SK-N-SH (cell line): ENCODE measurements at regions of chr14 and their contacts with region 1.

Region 1: DNA sequence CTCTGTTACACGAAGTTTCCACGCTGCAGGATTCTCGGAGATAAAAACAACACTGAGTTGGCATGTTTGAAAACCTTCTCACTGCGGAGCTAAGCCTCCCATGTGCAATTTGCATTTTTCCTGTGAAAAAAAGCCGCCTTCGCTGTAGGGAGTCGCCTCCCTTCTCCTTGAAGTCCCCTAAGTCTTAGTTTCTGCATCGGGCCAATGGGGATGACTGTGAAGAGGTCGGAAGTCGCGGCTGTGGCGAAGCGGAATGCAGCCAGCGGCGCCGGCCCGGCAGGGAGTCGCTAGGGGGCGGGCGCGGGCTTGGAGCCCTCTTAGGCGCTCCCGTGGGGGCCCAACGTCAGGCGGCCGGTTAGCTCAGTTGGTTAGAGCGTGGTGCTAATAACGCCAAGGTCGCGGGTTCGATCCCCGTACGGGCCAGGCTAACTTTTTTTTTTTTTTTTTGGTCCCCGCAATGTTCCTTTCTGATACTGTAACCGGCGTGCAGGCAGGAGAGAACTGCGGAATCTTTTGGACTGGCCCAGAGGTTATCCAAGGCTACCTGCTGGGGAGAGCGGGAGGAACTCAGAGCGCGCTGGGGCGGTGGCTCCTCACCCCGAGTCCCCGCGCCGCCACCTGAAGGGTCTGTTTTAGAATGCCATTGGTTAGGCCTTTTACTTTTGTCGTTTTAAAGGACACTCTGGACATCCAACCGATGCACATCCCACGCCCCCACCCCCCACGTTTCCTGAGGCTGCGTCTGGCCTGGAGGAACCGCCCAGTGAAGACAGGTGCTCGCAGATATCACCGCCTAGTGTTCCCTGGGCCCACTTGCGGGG is 2.6 kb upstream of the ZNF839 start:
- DNase-seq: peak; percentile 93
- H3K4me3 ChIP-seq: peak overlapping the region; percentile 59 to 62
- H3K27ac ChIP-seq: peak overlapping the region; percentile 70 to 90
- H3K4me1 ChIP-seq: peaks cover 5 to 26% of the 10 kb centered on the region in 2 experiments; a peak in 3 of 4 replicates
- H3K27me3 ChIP-seq: no peaks in the 10 kb centered on the region
- CTCF ChIP-seq: peak; percentile 77
- EP300 ChIP-seq: no peak; a peak in 1 of 4 replicates
- RAD21 ChIP-seq: no peak

Region 2: GRCh38 chr14:102063091-102063802 is 253.7 kb before region 1 on chr14:
- CTCF ChIA-PET with region 1: interaction called, 48 read pairs
- POLR2A ChIA-PET with region 1: interaction called, 4 read pairs
- DNase-seq: peak; percentile 94
- H3K4me3 ChIP-seq: no peak overlapping the region
- H3K27ac ChIP-seq: no peak overlapping the region
- H3K4me1 ChIP-seq: no peaks in the 10 kb centered on the region
- H3K27me3 ChIP-seq: no peaks in the 10 kb centered on the region
- CTCF ChIP-seq: peak; percentile 60
- EP300 ChIP-seq: no peak
- RAD21 ChIP-seq: peak; percentile 76

Region 3: DNA sequence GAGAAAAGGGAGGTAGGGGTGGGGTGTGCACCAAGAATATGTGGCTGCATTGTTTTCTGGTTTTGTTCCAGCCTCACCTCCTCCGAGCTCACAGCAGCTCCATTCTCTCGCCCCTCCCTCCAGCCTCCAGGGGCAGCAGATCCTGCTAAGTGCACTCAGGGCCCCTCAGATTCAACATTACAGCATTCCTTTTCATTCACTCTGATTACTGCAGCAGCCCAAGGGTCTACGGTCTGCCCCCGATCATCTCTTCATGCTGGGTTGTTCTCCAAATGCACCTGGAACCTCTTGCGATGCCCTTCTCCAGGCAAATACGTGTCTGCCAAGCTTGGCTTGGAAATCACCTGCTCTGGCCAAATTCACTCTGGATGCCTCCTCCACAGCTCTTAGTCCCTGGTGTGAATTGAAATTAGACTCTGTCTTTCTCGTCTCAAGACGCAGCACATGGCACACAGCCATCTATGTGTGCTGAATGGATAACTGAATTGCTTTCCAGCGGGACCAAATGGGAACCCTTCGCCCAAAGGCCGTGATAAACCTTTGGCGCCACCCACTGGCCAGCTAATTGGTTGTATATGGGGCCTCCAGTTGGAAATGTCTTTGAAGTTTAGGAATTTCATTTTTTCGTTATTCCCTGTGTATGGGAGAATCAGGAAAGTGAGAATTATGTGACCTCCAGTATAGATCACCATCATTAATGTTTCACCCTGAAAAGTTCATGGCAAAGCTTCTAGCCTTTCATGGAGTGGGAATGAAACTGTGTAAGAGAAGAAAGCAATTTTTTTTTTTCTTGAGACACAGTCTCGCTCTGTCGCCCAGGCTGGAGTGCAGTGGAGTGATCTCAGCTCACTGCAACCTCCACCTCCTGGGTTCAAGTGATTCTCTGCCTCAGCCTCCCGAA is 220.5 kb before region 1 on chr14:
- CTCF ChIA-PET with region 1: interaction called, 65 read pairs
- POLR2A ChIA-PET with region 1: no interaction called
- DNase-seq: peak; percentile 80
- H3K4me3 ChIP-seq: peak overlapping the region in 1 of 2 experiments; percentile 4; a peak in 1 of 4 replicates
- H3K27ac ChIP-seq: no peak overlapping the region
- H3K4me1 ChIP-seq: peaks cover 5 to 9% of the 10 kb centered on the region in 2 experiments; a peak in 2 of 4 replicates
- H3K27me3 ChIP-seq: no peaks in the 10 kb centered on the region
- CTCF ChIP-seq: peak; percentile 91
- EP300 ChIP-seq: no peak
- RAD21 ChIP-seq: peak; percentile 91

Region 4: DNA sequence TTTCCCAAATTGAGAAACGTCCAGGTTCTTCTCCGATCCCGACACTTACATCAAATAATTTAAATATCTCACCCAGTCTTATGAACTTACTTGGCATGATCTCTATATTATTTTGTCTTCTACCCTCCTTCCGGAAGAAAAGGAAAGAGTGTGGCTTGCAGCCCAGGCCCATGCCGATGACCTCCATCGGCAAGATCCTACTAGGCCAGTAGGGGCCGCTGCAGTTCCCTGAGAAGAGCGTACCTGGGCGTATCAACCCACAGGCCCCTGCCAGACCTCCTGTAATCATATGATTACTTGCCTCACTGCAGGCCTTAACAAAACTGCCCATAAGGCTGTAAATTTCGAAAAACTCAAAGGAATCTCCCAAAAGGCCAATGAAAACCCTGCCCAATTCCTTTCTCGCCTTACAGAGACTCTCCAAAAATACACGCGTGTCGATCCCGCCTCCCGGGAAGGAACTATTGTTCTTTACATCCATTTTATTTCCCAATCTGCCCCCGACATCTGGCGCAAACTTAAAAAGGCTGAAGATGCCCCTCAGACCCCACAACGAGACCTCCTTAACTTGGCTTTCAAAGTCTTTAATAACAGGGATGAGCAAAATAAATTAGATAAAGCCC is 81.6 kb before region 1 on chr14:
- CTCF ChIA-PET with region 1: interaction called, 26 read pairs
- POLR2A ChIA-PET with region 1: no interaction called
- DNase-seq: peak; percentile 87
- H3K4me3 ChIP-seq: peak overlapping the region in 1 of 2 experiments; percentile 30; a peak in 1 of 4 replicates
- H3K27ac ChIP-seq: no peak overlapping the region
- H3K4me1 ChIP-seq: peaks cover 0 to 5% of the 10 kb centered on the region in 2 experiments; a peak in 1 of 4 replicates
- H3K27me3 ChIP-seq: no peaks in the 10 kb centered on the region
- CTCF ChIP-seq: peak; percentile 79
- EP300 ChIP-seq: no peak
- RAD21 ChIP-seq: peak; percentile 76

Region 5: DNA sequence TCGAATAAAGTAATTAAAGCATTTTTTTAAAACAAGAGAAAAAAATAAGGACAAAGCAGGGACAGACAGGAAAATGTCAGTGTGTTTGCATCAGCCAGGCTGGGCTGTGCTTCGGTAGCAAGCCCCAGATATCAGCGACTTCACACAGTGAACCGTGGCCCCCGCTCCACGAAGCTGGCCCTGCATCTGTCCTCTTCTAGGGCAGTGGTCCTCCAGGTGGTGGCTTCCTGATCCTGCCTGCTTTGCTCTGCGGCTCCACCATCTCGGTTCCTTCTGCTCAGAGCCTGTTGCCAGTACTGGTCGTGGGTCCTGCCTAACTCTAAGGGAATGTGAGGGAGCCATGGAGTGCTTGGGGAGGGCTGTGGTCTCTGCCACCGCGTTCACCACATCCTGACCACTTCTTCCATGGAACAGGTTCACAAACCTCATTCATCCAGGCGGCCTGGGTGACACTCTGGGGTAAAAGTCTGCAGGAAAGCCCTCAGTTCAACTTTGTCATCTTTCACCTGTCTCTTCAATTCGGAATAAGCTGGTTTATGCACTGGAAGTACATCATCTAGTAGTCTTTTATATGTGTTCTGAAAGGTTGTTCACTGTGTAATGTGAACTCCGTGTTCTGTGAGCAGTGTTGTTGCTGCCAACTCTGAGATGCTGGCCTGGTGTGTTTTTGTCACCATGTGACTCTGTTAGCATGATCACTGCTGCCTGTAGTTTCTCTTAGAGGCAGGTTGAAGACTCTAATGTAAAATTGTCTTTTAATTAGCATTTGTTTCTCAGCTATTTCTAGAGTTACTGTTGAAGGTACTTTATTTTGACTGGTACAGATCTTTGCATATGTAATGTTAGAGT is 144.8 kb after region 1 on chr14:
- CTCF ChIA-PET with region 1: no interaction called
- POLR2A ChIA-PET with region 1: no interaction called
- DNase-seq: no peak
- H3K4me3 ChIP-seq: no peak overlapping the region
- H3K27ac ChIP-seq: no peak overlapping the region
- H3K4me1 ChIP-seq: no peaks in the 10 kb centered on the region
- H3K27me3 ChIP-seq: no peaks in the 10 kb centered on the region
- CTCF ChIP-seq: no peak
- EP300 ChIP-seq: no peak
- RAD21 ChIP-seq: no peak